PC-9 (cell line): ENCODE measurements at regions of chr19 and their contacts with region 1.

Region 1: GRCh38 chr19:7618771-7619514 is 10.4 kb downstream of the XAB2 start:
- DNase-seq: peak; percentile 93 to 97
- H3K4me3 ChIP-seq: peak overlapping the region; percentile 12; the same call in 1 of the 2 replicates
- H3K27ac ChIP-seq: peak overlapping the region; percentile 81
- H3K4me1 ChIP-seq: peaks cover 30% of the 10 kb centered on the region
- H3K27me3 ChIP-seq: no peaks in the 10 kb centered on the region
- CTCF ChIP-seq: no peak

Region 2: GRCh38 chr19:6364353-6364752 is 1254.6 kb before region 1 on chr19:
- CTCF ChIA-PET with region 1: no interaction called
- POLR2A ChIA-PET with region 1: interaction called, 15 read pairs
- intact Hi-C with region 1: no loop called
- DNase-seq: no peak
- H3K4me3 ChIP-seq: no peak overlapping the region
- H3K27ac ChIP-seq: no peak overlapping the region
- H3K4me1 ChIP-seq: no peaks in the 10 kb centered on the region
- H3K27me3 ChIP-seq: no peaks in the 10 kb centered on the region
- CTCF ChIP-seq: no peak

Region 3: GRCh38 chr19:7562646-7563393 is 56.1 kb before region 1 on chr19:
- CTCF ChIA-PET with region 1: interaction called, 10 read pairs
- POLR2A ChIA-PET with region 1: no interaction called
- intact Hi-C with region 1: loop called (anchors 2 kb)
- DNase-seq: no peak
- H3K4me3 ChIP-seq: no peak overlapping the region
- H3K27ac ChIP-seq: no peak overlapping the region
- H3K4me1 ChIP-seq: no peaks in the 10 kb centered on the region
- H3K27me3 ChIP-seq: no peaks in the 10 kb centered on the region
- CTCF ChIP-seq: no peak

Region 4: DNA sequence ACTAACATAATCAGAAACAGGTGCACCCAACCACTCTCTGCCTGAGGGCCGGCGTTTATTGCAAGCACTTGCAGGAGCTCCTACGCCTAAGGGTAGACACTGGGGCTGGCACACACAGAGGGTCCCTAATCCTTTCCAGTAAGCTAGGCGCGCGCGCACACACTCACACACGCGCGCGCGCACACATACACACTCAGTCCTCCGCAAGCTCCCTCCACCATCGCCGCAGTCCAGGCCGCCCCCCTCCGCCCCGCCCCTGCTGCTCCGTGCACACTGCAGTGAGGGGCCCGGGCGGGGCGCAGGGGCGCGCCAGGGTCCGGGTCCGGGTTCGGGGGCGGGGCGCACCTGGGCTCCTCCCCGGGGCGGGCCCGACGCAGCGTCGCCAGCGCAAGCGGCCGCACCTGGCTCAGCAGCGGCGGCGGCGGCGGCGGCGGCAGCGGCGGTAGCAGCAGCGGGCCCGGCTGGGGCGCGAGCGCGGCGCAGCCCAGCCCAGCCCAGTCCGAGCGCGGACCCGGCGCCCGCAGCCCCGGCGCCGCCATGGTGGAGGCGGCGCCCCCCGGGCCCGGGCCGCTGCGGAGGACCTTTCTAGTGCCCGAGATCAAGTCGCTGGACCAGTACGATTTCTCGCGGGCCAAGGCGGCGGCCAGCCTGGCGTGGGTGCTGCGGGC is 23.3 kb before region 1 on chr19 and contains the start of gene CAMSAP3:
- CTCF ChIA-PET with region 1: no interaction called
- POLR2A ChIA-PET with region 1: interaction called, 30 read pairs
- intact Hi-C with region 1: no loop called
- DNase-seq: peak in 1 of 2 experiments; percentile 71
- H3K4me3 ChIP-seq: peak within 1 kb of the TSS; percentile 72
- H3K27ac ChIP-seq: no peak within 1 kb of the TSS
- H3K4me1 ChIP-seq: peaks cover 10% of the 10 kb centered on the region
- H3K27me3 ChIP-seq: no peaks in the 10 kb centered on the region
- CTCF ChIP-seq: no peak
- total RNA-seq, gene CAMSAP3: 25.9 and 27.8 TPM in 2 replicates

Region 5: GRCh38 chr19:7629347-7630054 is 10.6 kb after region 1 on chr19 and contains the starts of genes PET100 and XAB2:
- CTCF ChIA-PET with region 1: interaction called, 4 read pairs
- POLR2A ChIA-PET with region 1: interaction called, 4 read pairs
- intact Hi-C with region 1: loop called (anchors 1 kb)
- DNase-seq: peak; percentile 95 to 98
- H3K4me3 ChIP-seq: peak within 1 kb of the TSS; percentile 92
- H3K27ac ChIP-seq: peak within 1 kb of the TSS; percentile 45
- H3K4me1 ChIP-seq: peaks cover 18% of the 10 kb centered on the region
- H3K27me3 ChIP-seq: no peaks in the 10 kb centered on the region
- CTCF ChIP-seq: no peak
- total RNA-seq, gene PET100: 149 and 222 TPM in 2 replicates
- total RNA-seq, gene XAB2: 44.9 and 51.3 TPM in 2 replicates

Region 6: GRCh38 chr19:7680606-7681339 is 61.8 kb after region 1 on chr19 and contains the start of gene TRAPPC5:
- CTCF ChIA-PET with region 1: interaction called, 3 read pairs
- POLR2A ChIA-PET with region 1: no interaction called
- intact Hi-C with region 1: loop called (anchors 2 kb)
- DNase-seq: peak; percentile 65 to 82
- H3K4me3 ChIP-seq: peak within 1 kb of the TSS; percentile 91
- H3K27ac ChIP-seq: peak within 1 kb of the TSS; percentile 32; the same call in 1 of the 2 replicates
- H3K4me1 ChIP-seq: peaks cover 21% of the 10 kb centered on the region
- H3K27me3 ChIP-seq: peaks cover 24% of the 10 kb centered on the region
- CTCF ChIP-seq: peak; percentile 89
- total RNA-seq, gene TRAPPC5: 81.2 and 103 TPM in 2 replicates

Region 7: DNA sequence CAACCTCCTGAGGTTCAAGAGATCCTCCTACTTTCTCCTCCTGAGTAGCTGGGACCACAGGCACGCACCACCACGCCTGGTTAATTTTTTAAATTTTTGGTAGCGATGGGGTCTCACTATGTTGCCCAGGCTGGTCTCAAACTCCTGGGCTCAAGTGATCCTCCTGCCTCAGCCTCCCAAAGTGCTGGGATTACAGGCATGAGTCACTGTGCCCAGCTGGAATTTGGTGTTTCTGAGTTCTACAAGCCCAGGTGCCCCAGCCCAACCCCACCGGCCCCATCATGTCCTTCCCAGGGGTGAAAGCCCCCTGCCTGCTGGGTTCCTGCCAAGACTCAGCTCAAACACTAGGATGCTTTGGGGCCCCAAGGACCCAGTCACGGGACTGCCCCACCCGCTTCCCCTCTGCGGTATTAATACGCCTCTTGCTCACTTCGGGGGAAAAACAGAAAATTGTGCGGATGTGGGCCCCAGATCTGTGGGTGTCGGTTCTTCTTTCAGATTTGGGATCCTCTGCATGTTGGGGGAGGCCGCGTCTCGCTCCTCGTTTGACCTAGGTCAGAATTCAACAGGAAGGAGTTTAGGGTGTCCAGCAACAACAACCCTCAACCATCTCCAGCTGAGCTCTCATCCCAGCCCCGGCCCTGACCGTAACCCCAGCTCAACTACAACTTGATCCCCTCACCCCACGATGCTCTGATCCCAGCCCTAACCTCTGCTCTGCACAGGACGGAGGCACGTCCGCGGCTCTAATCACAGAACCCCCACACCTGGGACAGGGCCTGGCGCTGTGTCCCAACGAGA is 86.6 kb after region 1 on chr19:
- CTCF ChIA-PET with region 1: no interaction called
- POLR2A ChIA-PET with region 1: no interaction called
- intact Hi-C with region 1: no loop called
- DNase-seq: no peak
- H3K4me3 ChIP-seq: no peak overlapping the region
- H3K27ac ChIP-seq: no peak overlapping the region
- H3K4me1 ChIP-seq: no peaks in the 10 kb centered on the region
- H3K27me3 ChIP-seq: peaks cover 13% of the 10 kb centered on the region; the same call in 1 of the 2 replicates
- CTCF ChIP-seq: no peak

Region 8: GRCh38 chr19:7829561-7830271 is 210.8 kb after region 1 on chr19 and contains the start of gene EVI5L:
- CTCF ChIA-PET with region 1: no interaction called
- POLR2A ChIA-PET with region 1: interaction called, 10 read pairs
- intact Hi-C with region 1: no loop called
- DNase-seq: peak; percentile 98 to 100
- H3K4me3 ChIP-seq: peak within 1 kb of the TSS; percentile 56; the same call in 1 of the 2 replicates
- H3K27ac ChIP-seq: no peak within 1 kb of the TSS
- H3K4me1 ChIP-seq: peaks cover 22% of the 10 kb centered on the region
- H3K27me3 ChIP-seq: peaks cover 13% of the 10 kb centered on the region; the same call in 1 of the 2 replicates
- CTCF ChIP-seq: no peak; the same call in 1 of the 2 replicates
- total RNA-seq, gene EVI5L: 13.1 and 19.2 TPM in 2 replicates